Activated CD8-positive, alpha-beta memory T cell treated with anti-CD3 and anti-CD28 coated beads, Interleukin-2, amount 10 ng/mL, durations not matched to agents 7 days and 5 days (primary cell): ENCODE measurements at regions of chr6 and their contacts with region 1.

Region 1: GRCh38 chr6:111764238-111765175 is 108.7 kb downstream of the FYN start:
- DNase-seq: peak; percentile 83
- ATAC-seq: peak; percentile 50
- H3K4me3 Mint-ChIP-seq: peak overlapping the region; percentile 64
- H3K27ac Mint-ChIP-seq: peak overlapping the region; percentile 99
- H3K4me1 Mint-ChIP-seq: peaks cover 98% of the 10 kb centered on the region
- H3K27me3 Mint-ChIP-seq: no peaks in the 10 kb centered on the region

Region 2: DNA sequence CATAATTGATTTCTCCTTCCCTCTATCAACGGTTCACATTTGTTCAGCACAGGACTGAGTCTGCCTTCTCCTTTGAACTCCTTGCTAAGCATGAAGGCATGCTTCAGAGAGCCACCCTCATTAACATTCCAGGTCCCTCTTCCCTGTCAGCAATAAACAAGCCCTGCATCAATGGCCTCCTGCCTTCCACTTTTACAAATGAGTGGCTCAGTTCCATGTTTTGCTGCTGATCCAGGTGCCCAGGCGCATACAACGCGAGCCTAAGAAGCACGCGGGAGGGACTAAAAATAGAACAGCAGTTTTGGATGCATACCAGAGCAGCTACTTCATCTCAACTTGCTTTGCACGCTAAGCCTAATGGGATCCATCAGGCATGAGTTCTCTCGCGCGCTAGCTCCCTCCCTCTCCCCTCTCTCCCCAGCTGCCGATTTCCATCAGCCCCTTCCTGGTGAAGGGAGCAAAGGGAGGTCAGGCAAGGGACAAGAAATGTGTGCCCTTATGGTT is 212.2 kb before region 1 on chr6:
- CTCF ChIA-PET with region 1: no interaction called
- DNase-seq: no peak
- ATAC-seq: no peak
- H3K4me3 Mint-ChIP-seq: no peak overlapping the region
- H3K27ac Mint-ChIP-seq: no peak overlapping the region
- H3K4me1 Mint-ChIP-seq: no peaks in the 10 kb centered on the region
- H3K27me3 Mint-ChIP-seq: no peaks in the 10 kb centered on the region

Region 3: DNA sequence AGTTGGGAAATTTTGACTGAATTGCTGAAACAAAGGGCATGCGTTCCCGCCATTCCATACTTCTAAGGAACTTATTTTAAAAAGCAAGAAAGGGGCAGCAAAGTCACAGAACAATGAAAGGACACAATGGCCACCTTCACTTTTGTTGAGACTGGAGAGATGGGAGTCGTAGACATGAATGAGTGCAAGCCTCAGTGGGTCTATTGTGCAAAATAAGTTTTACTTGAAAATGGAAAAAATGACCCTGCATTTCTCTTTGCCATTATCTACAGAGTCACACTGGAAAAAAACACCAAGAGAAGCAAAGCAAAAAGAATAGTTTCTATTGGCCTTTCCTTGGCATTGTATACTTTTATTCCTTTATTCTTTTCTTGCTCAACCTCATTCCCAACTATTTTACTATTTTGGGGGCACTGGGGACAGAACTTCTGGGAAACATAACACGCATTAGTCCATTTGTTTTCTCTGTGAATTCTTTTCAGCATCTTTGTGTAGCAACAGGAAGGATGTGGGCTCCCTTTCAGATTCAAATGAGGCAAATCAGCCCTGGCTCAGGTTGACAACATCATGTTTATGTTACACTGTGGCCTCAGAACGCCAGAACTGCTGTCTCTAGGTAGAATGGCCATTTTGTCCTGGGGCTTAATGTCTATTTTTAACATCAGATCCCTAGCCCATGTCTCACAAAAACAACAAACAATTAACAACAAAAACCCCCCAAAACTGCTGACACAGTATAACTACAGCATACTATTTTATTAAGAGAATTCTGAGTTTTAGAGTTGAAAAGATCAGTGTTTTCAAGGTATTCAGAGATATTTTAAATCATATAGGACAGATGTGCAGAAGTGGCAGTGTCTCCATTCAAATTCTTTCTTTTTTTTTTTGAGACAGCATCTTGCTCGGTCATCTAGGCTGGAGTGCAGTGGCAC is 13.5 kb before region 1 on chr6:
- CTCF ChIA-PET with region 1: interaction called, 27 read pairs
- DNase-seq: peak; percentile 87
- ATAC-seq: peak; percentile 85
- H3K4me3 Mint-ChIP-seq: peak overlapping the region; percentile 27
- H3K27ac Mint-ChIP-seq: peak overlapping the region; percentile 96
- H3K4me1 Mint-ChIP-seq: peaks cover 94% of the 10 kb centered on the region
- H3K27me3 Mint-ChIP-seq: no peaks in the 10 kb centered on the region

Region 4: GRCh38 chr6:111777357-111777756 is 12.8 kb after region 1 on chr6:
- CTCF ChIA-PET with region 1: interaction called, 52 read pairs
- DNase-seq: peak; percentile 70
- ATAC-seq: peak; percentile 46
- H3K4me3 Mint-ChIP-seq: peak overlapping the region; percentile 69
- H3K27ac Mint-ChIP-seq: peak overlapping the region; percentile 89
- H3K4me1 Mint-ChIP-seq: peaks cover 87% of the 10 kb centered on the region
- H3K27me3 Mint-ChIP-seq: no peaks in the 10 kb centered on the region

Region 5: DNA sequence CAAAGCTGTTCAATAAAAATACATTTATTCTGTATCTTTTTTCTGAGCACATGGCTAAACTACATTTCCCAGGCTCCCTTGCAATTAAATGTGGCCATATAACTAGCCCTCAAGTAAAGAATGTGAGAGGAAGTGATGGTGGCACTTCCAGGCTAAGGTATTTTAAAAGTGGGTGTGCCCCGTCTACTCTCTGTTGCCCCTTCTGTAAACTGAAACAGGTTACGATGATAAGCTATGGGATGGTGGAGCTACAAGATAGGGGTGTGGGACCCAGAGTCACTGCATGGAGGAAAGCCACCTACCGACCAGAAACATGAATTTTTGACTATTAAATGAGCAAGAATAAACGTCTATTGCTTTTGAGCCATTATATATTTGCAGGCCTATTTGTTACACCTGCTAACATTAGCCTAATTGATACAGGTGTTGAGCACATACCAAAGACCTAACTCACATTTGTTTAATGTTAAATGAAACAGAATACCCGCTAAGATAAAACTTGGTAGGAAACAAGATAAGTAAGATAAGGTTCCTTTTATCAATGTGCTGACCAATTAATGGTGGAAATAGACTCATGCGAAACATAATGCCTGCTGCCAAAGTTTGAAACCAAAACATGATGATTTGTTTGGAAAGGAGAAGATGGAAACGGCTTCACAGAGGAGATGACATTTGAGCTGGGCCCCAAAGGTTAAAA is 105.7 kb after region 1 on chr6:
- CTCF ChIA-PET with region 1: interaction called, 10 read pairs
- DNase-seq: no peak
- ATAC-seq: no peak
- H3K4me3 Mint-ChIP-seq: peak overlapping the region; percentile 90
- H3K27ac Mint-ChIP-seq: peak overlapping the region; percentile 93
- H3K4me1 Mint-ChIP-seq: peaks cover 65% of the 10 kb centered on the region
- H3K27me3 Mint-ChIP-seq: no peaks in the 10 kb centered on the region